ENCODE measurements at regions of chr4 and their contacts with region 1.

Region 1: GRCh38 chr4:94976371-94977011 is 218.7 kb downstream of the BMPR1B start:
- DNase-seq: peak; percentile 78
- ATAC-seq: peak; percentile 58
- H3K4me3 ChIP-seq: no peak overlapping the region
- H3K27ac ChIP-seq: peak overlapping the region; percentile 96
- H3K4me1 ChIP-seq: peaks cover 34% of the 10 kb centered on the region
- H3K27me3 ChIP-seq: no peaks in the 10 kb centered on the region
- CTCF ChIP-seq: no peak

Region 2: GRCh38 chr4:94939791-94940519 is 36.5 kb before region 1 on chr4:
- CTCF ChIA-PET with region 1: no interaction called
- POLR2A ChIA-PET with region 1: no interaction called
- intact Hi-C with region 1: loop called (anchors 5 kb)
- DNase-seq: peak; percentile 68
- ATAC-seq: peak; percentile 86
- H3K4me3 ChIP-seq: no peak overlapping the region
- H3K27ac ChIP-seq: peak overlapping the region; percentile 52
- H3K4me1 ChIP-seq: peaks cover 35% of the 10 kb centered on the region
- H3K27me3 ChIP-seq: no peaks in the 10 kb centered on the region
- CTCF ChIP-seq: no peak

Region 3: DNA sequence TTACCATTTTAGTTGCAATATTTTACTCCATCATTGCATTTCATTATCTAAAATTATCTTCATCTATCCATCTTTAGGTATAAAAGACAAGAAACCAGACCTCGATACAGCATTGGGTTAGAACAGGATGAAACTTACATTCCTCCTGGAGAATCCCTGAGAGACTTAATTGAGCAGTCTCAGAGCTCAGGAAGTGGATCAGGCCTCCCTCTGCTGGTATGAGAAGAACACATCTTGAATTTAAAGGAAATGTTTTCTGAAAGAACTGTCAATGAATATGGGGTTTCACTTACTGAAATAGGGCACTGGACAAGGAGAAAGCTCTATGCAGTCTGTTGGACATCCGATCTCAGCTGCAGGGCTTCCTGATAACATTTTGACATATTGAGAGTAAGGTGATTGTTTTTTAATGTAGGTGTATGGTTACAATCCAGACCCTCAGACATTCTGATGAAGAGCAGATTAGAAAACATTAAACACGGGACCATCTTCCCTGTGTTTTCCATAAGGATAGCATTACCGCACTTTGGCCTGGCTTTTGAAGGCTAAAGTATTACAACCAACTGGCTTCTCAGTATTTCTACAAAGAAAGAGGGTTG is 148.5 kb after region 1 on chr4:
- CTCF ChIA-PET with region 1: no interaction called
- POLR2A ChIA-PET with region 1: no interaction called
- intact Hi-C with region 1: no loop called
- DNase-seq: peak; percentile 70
- ATAC-seq: peak; percentile 81
- H3K4me3 ChIP-seq: no peak overlapping the region
- H3K27ac ChIP-seq: no peak overlapping the region
- H3K4me1 ChIP-seq: peaks cover 4% of the 10 kb centered on the region
- H3K27me3 ChIP-seq: no peaks in the 10 kb centered on the region
- CTCF ChIP-seq: peak; percentile 74